Natural killer cell (primary cell): ENCODE measurements at regions of chr5 and their contacts with region 1.

Region 1: GRCh38 chr5:157142317-157143126 is at the start of gene MED7:
- DNase-seq: peak; percentile 82 to 99
- ATAC-seq: peak; percentile 95 to 99 (median 96)
- H3K4me3 ChIP-seq: peak within 1 kb of the TSS; percentile 86
- H3K4me3 Mint-ChIP-seq: peak within 1 kb of the TSS; percentile 98
- H3K27ac ChIP-seq: peak within 1 kb of the TSS; percentile 89
- H3K27ac Mint-ChIP-seq: peak within 1 kb of the TSS; percentile 97 to 98
- H3K4me1 ChIP-seq: peaks cover 24% of the 10 kb centered on the region
- H3K4me1 Mint-ChIP-seq: peaks cover 32 to 52% of the 10 kb centered on the region in 2 donors
- H3K27me3 ChIP-seq: no peaks in the 10 kb centered on the region
- H3K27me3 Mint-ChIP-seq: no peaks in the 10 kb centered on the region
- CTCF ChIP-seq: no peak
- total RNA-seq, gene MED7: 9.6 to 13.3 (median 12.4) TPM

Region 2: DNA sequence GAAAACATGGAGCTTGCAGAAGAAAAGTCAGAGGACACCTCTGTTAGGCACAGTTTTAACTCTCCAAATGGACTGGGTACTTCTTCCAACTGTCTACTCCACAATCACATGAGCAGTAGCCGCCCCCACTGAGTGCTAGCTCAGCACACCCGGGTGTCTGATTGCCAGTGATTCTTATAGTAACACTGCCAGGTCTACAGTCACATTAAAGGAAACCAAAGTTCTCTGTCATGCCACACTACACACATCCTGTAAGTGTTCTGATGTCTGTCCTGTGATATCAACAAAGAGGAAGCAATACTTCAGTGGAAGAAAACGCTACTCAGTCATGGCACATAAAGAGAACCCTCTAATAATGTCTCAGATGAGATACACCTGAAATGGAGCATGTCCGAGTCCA is 33.5 kb before region 1 on chr5 and contains the start of gene HAVCR2:
- intact Hi-C with region 1: loop called (anchors 1 kb)
- DNase-seq: peak; percentile 62 to 66
- ATAC-seq: peak; percentile 80 to 95 (median 90)
- H3K4me3 ChIP-seq: peak within 1 kb of the TSS; percentile 52
- H3K4me3 Mint-ChIP-seq: peak within 1 kb of the TSS; percentile 94
- H3K27ac ChIP-seq: peak within 1 kb of the TSS; percentile 73
- H3K27ac Mint-ChIP-seq: peak within 1 kb of the TSS; percentile 95 to 97
- H3K4me1 ChIP-seq: peaks cover 46% of the 10 kb centered on the region
- H3K4me1 Mint-ChIP-seq: peaks cover 58% of the 10 kb centered on the region in 2 donors
- H3K27me3 ChIP-seq: no peaks in the 10 kb centered on the region
- H3K27me3 Mint-ChIP-seq: no peaks in the 10 kb centered on the region
- CTCF ChIP-seq: no peak
- total RNA-seq, gene HAVCR2: 60.0 to 92.2 (median 74.3) TPM

Region 3: DNA sequence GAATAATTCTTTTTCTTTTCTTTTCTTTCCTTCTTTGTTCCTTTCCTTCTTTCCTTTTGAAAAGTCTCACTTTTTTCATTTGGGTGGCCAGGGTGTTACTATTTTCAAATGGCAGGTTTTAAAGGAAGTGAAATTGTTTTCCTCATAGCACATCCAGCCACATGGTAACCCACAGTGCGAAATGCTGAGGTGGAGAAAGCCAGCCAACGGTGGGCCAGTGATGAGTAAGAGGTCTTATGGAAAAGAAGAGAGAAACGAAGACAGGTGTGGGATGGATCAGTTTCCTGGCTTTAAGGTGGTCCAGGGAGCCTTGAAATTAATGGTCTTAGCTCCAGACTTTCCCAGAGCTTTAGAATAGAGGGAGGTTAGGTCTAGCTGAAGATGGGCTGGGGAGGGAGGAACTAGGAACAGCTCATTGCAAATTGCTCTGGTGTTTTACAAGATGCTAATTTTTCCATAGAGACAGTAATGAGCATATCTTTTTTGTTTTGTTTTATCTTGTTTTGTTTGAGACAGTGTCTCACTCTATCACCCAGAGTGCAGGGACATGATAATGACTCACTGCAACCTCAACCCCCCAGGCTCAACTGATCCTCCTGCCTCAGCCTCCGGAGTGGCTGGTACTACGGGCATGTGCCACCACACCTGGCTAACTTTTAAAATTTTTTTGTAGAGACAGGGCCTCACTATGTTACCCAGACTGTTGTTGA is 55.9 kb after region 1 on chr5:
- intact Hi-C with region 1: loop called (anchors 5 kb)
- DNase-seq: peak; percentile 53 to 74
- ATAC-seq: peak; percentile 57 to 70 (median 66)
- H3K4me3 ChIP-seq: no peak overlapping the region
- H3K4me3 Mint-ChIP-seq: peak overlapping the region; percentile 73
- H3K27ac ChIP-seq: peak overlapping the region; percentile 48
- H3K27ac Mint-ChIP-seq: peak overlapping the region; percentile 82 to 97
- H3K4me1 ChIP-seq: peaks cover 70% of the 10 kb centered on the region
- H3K4me1 Mint-ChIP-seq: peaks cover 82 to 85% of the 10 kb centered on the region in 2 donors
- H3K27me3 ChIP-seq: no peaks in the 10 kb centered on the region
- H3K27me3 Mint-ChIP-seq: no peaks in the 10 kb centered on the region
- CTCF ChIP-seq: no peak

Region 4: GRCh38 chr5:157214861-157215513 is 72.5 kb after region 1 on chr5:
- intact Hi-C with region 1: loop called (anchors 1 kb)
- DNase-seq: peak in 1 of 2 donors; percentile 81
- ATAC-seq: peak; percentile 59 to 78 (median 66)
- H3K4me3 ChIP-seq: no peak overlapping the region
- H3K4me3 Mint-ChIP-seq: peak overlapping the region; percentile 89
- H3K27ac ChIP-seq: peak overlapping the region; percentile 73
- H3K27ac Mint-ChIP-seq: peak overlapping the region; percentile 86 to 92
- H3K4me1 ChIP-seq: peaks cover 76% of the 10 kb centered on the region
- H3K4me1 Mint-ChIP-seq: peaks cover 81 to 87% of the 10 kb centered on the region in 2 donors
- H3K27me3 ChIP-seq: no peaks in the 10 kb centered on the region
- H3K27me3 Mint-ChIP-seq: no peaks in the 10 kb centered on the region
- CTCF ChIP-seq: no peak

Region 5: DNA sequence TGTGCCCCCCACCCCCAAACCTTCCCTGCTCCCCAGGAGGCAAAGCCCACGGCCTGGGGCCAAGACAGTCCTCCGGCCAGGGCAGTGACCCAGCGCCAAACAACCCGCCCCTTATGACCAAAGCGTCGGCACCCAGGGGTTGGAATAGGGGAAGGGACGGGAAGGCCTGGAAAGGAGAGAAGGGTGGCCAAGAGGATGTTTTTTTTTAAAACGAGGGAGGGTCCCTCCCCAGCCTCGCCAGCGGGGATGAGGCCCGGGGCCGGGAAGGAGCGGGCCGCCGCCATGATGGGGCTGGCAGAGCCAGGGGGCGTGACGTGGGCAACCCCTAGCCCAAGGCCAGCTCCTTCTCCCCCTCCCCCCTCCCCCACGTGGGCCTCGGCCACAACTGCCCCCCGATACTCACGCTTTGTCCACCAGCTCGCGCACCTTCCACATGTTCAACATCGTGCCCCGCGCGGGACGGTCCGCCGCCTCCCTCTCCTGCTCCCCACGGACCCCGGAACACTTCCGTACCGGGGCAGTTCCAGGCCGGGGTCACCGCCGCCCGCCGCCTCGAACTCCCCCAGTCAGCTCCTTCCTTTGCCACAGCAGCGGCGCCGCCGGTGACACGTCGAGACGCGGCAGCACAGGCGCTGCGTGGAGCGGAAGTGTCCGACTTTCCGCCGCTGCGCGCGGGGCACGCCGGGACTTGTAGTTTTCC is 716.2 kb after region 1 on chr5 and contains the start of gene CLINT1:
- intact Hi-C with region 1: loop called (anchors 2 kb)
- DNase-seq: peak; percentile 82 to 94
- ATAC-seq: peak; percentile 87 to 91 (median 91)
- H3K4me3 ChIP-seq: peak within 1 kb of the TSS; percentile 96
- H3K4me3 Mint-ChIP-seq: peak within 1 kb of the TSS; percentile 98
- H3K27ac ChIP-seq: peak within 1 kb of the TSS; percentile 93
- H3K27ac Mint-ChIP-seq: peak within 1 kb of the TSS; percentile 98 to 99
- H3K4me1 ChIP-seq: peaks cover 10% of the 10 kb centered on the region
- H3K4me1 Mint-ChIP-seq: peaks cover 50 to 55% of the 10 kb centered on the region in 2 donors
- H3K27me3 ChIP-seq: no peaks in the 10 kb centered on the region
- H3K27me3 Mint-ChIP-seq: peaks cover 0 to 3% of the 10 kb centered on the region in 2 donors
- CTCF ChIP-seq: no peak
- total RNA-seq, gene CLINT1: 111 to 156 (median 132) TPM